HCT116 (cell line): ENCODE measurements at regions of chr21 and their contacts with region 1.

Region 1: GRCh38 chr21:44892536-44893277 is 19.2 kb upstream of the PTTG1IP start:
- DNase-seq: peak; percentile 26
- ATAC-seq: peak; percentile 89
- H3K4me3 ChIP-seq: no peak overlapping the region
- H3K27ac ChIP-seq: no peak overlapping the region
- H3K4me1 ChIP-seq: no peaks in the 10 kb centered on the region; a peak in 1 of 4 replicates
- H3K27me3 ChIP-seq: no peaks in the 10 kb centered on the region
- CTCF ChIP-seq: peak; percentile 76 to 94 (median 90)
- POLR2A ChIP-seq: no peak
- RAD21 ChIP-seq: peak; percentile 77

Region 2: GRCh38 chr21:44927587-44928461 is 35.1 kb after region 1 on chr21:
- CTCF ChIA-PET with region 1: no interaction called
- POLR2A ChIA-PET with region 1: no interaction called
- RAD21 ChIA-PET with region 1: no interaction called
- intact Hi-C with region 1: loop called (anchors 5 kb)
- DNase-seq: no peak
- ATAC-seq: peak; percentile 80
- H3K4me3 ChIP-seq: peak overlapping the region; percentile 6 to 44
- H3K27ac ChIP-seq: peak overlapping the region; percentile 20; the same call in 1 of the 2 replicates
- H3K4me1 ChIP-seq: peaks cover 20 to 34% of the 10 kb centered on the region in 2 experiments
- H3K27me3 ChIP-seq: peaks cover 64% of the 10 kb centered on the region
- CTCF ChIP-seq: peak in 1 of 3 experiments; percentile 8; a peak in 1 of 6 replicates
- POLR2A ChIP-seq: no peak
- RAD21 ChIP-seq: no peak